Psoas muscle (tissue), 8 donors: ENCODE measurements at regions of chr22 and their contacts with region 1.

Region 1: GRCh38 chr22:29689880-29690213 is 30.0 kb upstream of the CABP7 start:
- DNase-seq: peak; percentile 67 to 82
- ATAC-seq: peak; percentile 77 to 90 (median 86)
- H3K4me3 ChIP-seq: no peak overlapping the region
- H3K27ac ChIP-seq: no peak overlapping the region
- H3K4me1 ChIP-seq: peaks cover 9% of the 10 kb centered on the region
- H3K27me3 ChIP-seq: no peaks in the 10 kb centered on the region
- CTCF ChIP-seq: peak; percentile 79

Region 2: DNA sequence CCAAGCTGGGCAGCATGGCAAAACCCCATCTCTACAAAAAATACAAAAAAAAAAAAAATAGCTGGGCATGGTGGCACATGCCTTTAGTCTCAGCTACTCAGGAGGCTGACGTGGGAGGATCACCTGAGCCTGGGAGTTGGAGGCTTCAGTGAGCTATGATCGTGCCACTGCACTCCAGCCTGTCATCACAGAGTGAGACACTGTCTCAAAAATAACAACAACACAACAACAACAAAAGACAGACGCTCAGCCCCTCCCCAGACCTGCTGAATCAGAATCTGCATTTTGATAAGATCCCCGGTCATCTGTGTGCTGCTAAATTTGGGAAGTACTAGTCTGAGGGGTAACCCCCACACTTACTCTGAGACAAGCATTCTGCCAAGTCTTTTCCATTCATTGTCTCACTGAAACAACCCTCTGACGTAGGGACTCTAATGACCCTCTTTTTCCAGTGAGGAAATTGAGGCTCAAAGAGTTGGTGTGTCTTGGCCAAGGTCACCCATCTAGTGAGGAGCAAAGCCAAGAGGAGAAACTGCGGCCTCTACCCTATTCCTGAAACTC is 202.3 kb before region 1 on chr22:
- intact Hi-C with region 1: no loop called
- DNase-seq: no peak
- ATAC-seq: no peak
- H3K4me3 ChIP-seq: no peak overlapping the region
- H3K27ac ChIP-seq: no peak overlapping the region
- H3K4me1 ChIP-seq: no peaks in the 10 kb centered on the region
- H3K27me3 ChIP-seq: peaks cover 0 to 9% (median 5%) of the 10 kb centered on the region in 3 donors
- CTCF ChIP-seq: no peak

Region 3: DNA sequence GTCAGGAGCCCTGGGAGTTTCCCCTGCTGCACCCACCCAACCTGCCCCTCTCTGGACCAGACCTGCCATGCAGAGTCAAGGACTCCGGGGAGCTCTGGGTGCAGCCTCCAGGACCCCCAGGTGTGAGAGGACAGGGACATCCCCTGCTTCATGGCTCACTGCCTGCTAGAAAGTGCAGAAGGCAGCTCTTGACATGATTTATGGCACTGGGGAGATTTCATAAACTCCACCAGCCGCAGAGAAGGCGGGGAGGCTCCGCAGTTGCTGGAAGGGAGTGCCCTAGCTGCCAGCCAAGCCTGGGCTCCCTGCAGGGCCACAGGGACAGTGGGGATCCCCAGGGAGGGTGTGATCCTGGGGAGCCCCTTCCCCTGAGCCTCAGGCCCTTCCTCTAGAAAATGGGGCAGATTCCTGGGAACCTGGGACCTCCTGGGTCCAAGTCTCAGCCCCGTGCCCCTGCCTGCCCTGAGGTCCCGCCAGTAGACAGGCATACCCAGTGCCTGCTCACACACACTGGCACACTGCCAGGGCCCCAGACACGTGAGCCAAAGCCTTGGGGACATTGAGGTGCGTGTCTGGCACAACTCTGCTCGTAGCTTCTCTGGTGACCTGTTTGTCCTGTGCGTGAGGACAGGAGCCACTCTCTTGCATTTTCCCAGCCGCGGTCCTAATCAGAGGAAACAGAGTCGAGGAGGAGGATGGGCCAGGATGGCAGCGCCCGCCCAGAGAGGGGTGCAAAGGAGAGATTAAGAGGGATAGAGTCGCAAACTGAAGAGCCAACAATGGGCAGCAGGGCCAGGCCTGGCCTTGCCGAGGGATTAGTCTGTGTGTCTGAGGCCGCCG is 43.7 kb after region 1 on chr22:
- intact Hi-C with region 1: no loop called
- DNase-seq: peak; percentile 53 to 81
- ATAC-seq: peak; percentile 62 to 80 (median 79)
- H3K4me3 ChIP-seq: no peak overlapping the region
- H3K27ac ChIP-seq: peak overlapping the region; percentile 43
- H3K4me1 ChIP-seq: peaks cover 20% of the 10 kb centered on the region
- H3K27me3 ChIP-seq: no peaks in the 10 kb centered on the region
- CTCF ChIP-seq: no peak

Region 4: GRCh38 chr22:30027169-30027568 is 337.3 kb after region 1 on chr22:
- intact Hi-C with region 1: no loop called
- DNase-seq: no peak
- ATAC-seq: no peak
- H3K4me3 ChIP-seq: no peak overlapping the region
- H3K27ac ChIP-seq: no peak overlapping the region
- H3K4me1 ChIP-seq: peaks cover 5% of the 10 kb centered on the region
- H3K27me3 ChIP-seq: no peaks in the 10 kb centered on the region
- CTCF ChIP-seq: no peak

Region 5: GRCh38 chr22:30089655-30089974 is 399.8 kb after region 1 on chr22:
- intact Hi-C with region 1: loop called in 1 of 2 experiments (anchors 5 kb)
- DNase-seq: no peak
- ATAC-seq: peak in 1 of 4 donors; percentile 15
- H3K4me3 ChIP-seq: no peak overlapping the region
- H3K27ac ChIP-seq: no peak overlapping the region
- H3K4me1 ChIP-seq: no peaks in the 10 kb centered on the region
- H3K27me3 ChIP-seq: peaks cover 0 to 9% (median 0%) of the 10 kb centered on the region in 3 donors
- CTCF ChIP-seq: no peak